Pancreas (tissue), 10 donors: ENCODE measurements at regions of chr7 and their contacts with region 1.

Region 1: DNA sequence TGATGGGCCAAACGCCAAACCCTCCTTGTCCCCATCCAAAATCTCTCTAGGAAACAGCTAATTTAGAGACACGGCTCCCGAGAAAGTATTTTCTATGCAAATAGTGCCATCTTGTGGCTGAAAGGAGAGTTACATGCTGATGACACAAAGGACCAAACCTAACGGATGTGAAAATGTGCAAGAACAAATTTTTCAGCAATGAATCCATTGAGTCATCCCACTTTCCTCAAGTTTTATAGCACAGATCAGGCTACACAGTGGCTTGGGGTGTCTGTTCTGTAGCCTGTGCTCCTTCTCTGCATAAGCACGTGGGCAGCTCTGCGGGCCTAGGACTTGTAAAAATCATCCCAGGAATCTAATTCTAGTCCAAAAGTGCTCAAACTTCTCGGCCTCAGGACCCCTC is 154.8 kb upstream of the PRR15 start:
- DNase-seq: peak in 3 of 6 donors; percentile 33 to 74 (median 38)
- ATAC-seq: peak; percentile 62 to 79 (median 70)
- H3K4me3 ChIP-seq: no peak overlapping the region
- H3K27ac ChIP-seq: no peak overlapping the region
- H3K4me1 ChIP-seq: peaks cover 0 to 16% (median 15%) of the 10 kb centered on the region in 3 donors
- H3K27me3 ChIP-seq: no peaks in the 10 kb centered on the region
- CTCF ChIP-seq: peak; percentile 50 to 84 (median 78)

Region 2: DNA sequence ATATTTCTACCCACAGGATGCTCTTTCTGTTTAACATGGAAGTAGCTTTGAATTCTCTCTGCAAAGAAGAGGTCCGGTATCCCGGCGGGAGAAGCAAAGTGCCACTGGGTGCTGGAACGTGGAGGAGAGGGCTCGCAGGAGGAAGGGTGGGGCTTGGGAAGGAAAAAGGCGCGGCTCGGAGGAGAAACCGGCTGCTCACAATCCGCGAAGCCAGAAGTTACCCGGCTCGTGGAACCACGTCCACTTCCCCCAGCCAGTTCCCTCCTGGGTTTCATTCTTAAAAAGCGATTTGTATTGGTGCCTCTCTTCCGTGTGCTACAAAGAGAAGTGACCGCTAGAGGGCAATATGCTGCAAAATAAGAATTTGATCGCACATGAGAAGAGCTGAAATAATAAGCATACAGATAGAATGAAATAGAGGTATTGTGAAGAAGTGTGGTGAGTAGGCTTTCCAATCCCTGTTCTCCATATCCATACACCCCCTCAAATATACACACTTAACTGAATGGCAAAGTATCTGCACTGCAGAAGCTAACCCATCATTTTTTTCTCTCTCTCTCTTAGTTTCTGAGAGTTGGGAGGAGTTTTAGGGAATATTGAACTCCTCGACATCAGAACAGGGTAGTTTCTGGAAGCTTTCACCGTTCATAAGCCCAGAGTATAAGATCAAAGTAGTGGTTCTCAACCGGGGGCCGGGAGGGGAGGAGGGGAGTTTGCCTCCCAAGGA is 481.8 kb before region 1 on chr7:
- intact Hi-C with region 1: loop called in 2 of 3 experiments (anchors 5 to 10 kb)
- DNase-seq: peak in 5 of 6 donors; percentile 40 to 68 (median 65)
- ATAC-seq: peak; percentile 75 to 94 (median 92)
- H3K4me3 ChIP-seq: peak overlapping the region; percentile 11 to 50 (median 38)
- H3K27ac ChIP-seq: no peak overlapping the region
- H3K4me1 ChIP-seq: peaks cover 0 to 9% (median 4%) of the 10 kb centered on the region in 3 donors
- H3K27me3 ChIP-seq: peaks cover 0 to 5% (median 0%) of the 10 kb centered on the region in 4 donors
- CTCF ChIP-seq: peak; percentile 70 to 83 (median 74)

Region 3: DNA sequence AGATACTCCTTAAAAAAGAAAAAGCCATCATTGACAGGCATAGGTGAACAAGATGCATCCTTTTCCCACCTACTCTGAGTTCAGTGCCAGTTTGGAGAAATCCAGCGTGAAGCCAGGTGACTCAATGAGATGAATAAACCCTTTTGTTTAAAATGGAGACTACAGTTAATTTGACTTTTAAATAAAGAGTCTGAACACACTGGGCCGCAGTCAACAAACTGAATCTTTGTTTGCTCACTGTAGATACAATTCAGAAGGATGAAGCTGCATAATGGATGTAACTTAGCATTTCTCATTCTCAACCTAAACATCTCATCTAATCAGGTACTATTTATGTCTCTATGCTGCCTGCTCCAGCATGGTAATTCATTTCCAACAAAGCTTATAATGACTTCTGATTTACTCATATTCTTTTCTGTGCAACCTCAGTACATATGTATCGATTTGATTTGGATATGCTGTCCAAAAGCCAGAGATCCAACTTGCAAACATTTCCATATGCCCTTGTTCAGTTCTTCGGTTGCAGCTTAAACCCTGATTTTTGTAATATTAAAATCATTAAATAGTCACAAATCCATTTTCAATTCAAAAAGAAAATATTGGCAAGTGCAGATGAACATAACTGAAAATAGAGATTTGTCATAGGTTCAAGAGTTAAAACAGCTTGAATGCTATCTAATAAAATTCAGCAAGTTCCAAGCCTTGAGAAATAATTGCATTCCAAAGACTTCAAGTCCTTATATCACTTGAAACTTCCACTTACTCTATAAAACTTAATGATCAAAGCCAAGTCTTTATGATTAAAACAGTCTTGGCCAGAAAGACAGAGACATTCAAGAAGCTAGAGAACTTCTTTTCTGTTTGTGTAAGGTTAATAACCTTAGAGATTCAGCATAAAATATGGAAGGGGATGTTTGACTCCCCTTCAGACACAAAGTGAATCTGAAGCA is 330.3 kb before region 1 on chr7:
- intact Hi-C with region 1: no loop called
- DNase-seq: no peak
- ATAC-seq: no peak
- H3K4me3 ChIP-seq: no peak overlapping the region
- H3K27ac ChIP-seq: no peak overlapping the region
- H3K4me1 ChIP-seq: no peaks in the 10 kb centered on the region
- H3K27me3 ChIP-seq: no peaks in the 10 kb centered on the region
- CTCF ChIP-seq: no peak

Region 4: DNA sequence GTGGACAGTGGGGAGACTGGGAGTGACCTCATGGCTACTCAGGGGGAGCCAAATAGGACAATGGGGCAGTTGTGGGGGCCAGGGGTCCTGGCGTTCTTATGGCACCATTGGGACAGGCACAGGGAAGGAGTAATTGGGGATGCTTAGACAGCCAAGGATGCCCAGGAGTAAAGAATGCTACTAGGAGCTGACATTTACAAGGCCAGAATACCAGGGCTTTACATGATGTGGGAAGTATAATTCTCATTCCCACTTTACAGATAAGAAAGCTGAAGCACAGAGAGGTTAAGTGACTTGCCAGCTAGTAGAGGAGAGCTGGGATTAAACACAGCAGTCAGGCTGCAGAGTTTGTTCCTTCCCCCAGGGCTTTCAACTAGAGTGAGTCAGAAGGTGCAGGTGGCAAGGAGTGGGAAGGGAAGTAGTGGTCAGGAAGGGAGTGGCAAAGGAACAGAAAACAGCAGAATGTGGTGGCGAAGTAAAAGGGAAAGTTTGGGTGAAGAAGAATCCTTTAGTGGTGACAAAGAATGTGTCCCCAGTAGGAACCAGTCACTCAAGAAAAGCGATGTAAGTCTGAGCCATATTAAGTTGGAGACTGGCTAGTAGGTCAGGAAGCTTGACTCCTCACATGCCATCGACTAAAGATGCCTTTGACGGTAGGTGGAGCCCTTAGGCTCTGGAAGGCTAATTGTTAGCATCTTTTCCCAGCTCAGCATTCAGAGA is 295.3 kb before region 1 on chr7:
- intact Hi-C with region 1: loop called in 2 of 3 experiments (anchors 10 kb)
- DNase-seq: peak in 1 of 6 donors; percentile 31
- ATAC-seq: peak in 3 of 4 donors; percentile 70 to 72 (median 70)
- H3K4me3 ChIP-seq: no peak overlapping the region
- H3K27ac ChIP-seq: no peak overlapping the region
- H3K4me1 ChIP-seq: peaks cover 0 to 7% (median 4%) of the 10 kb centered on the region in 3 donors
- H3K27me3 ChIP-seq: no peaks in the 10 kb centered on the region
- CTCF ChIP-seq: peak in 1 of 4 donors; percentile 10